ENCODE measurements at regions of chr13 and their contacts with region 1.

Region 1: GRCh38 chr13:106917673-106918556 is 350.0 kb upstream of the ARGLU1 start:
- DNase-seq: peak; percentile 70
- ATAC-seq: peak; percentile 75
- H3K4me3 ChIP-seq: peak overlapping the region; percentile 35 to 61 (median 59)
- H3K4me3 Mint-ChIP-seq: peak overlapping the region; percentile 75
- H3K27ac ChIP-seq: no peak overlapping the region
- H3K27ac Mint-ChIP-seq: no peak overlapping the region
- H3K4me1 ChIP-seq: peaks cover 20 to 23% of the 10 kb centered on the region in 2 donors
- H3K4me1 Mint-ChIP-seq: peaks cover 17% of the 10 kb centered on the region
- H3K27me3 ChIP-seq: peaks cover 0 to 11% (median 6%) of the 10 kb centered on the region in 4 experiments
- H3K27me3 Mint-ChIP-seq: peaks cover 38% of the 10 kb centered on the region
- CTCF ChIP-seq: peak; percentile 82

Region 2: GRCh38 chr13:106561551-106562170 is 356.3 kb before region 1 on chr13:
- CTCF ChIA-PET with region 1: no interaction called
- POLR2A ChIA-PET with region 1: no interaction called
- intact Hi-C with region 1: loop called (anchors 5 kb)
- DNase-seq: peak; percentile 51
- ATAC-seq: peak; percentile 83
- H3K4me3 ChIP-seq: no peak overlapping the region
- H3K4me3 Mint-ChIP-seq: peak overlapping the region; percentile 64
- H3K27ac ChIP-seq: peak overlapping the region in 1 of 2 donors; percentile 54
- H3K27ac Mint-ChIP-seq: no peak overlapping the region
- H3K4me1 ChIP-seq: peaks cover 43 to 56% of the 10 kb centered on the region in 2 donors
- H3K4me1 Mint-ChIP-seq: peaks cover 69% of the 10 kb centered on the region
- H3K27me3 ChIP-seq: no peaks in the 10 kb centered on the region
- H3K27me3 Mint-ChIP-seq: no peaks in the 10 kb centered on the region
- CTCF ChIP-seq: no peak

Measured in B cell (primary cell).